Mammary epithelial cell (primary cell): ENCODE measurements at regions of chr2 and their contacts with region 1.

Region 1: GRCh38 chr2:219530048-219530963 is 13.3 kb downstream of the CHPF start:
- DNase-seq: peak; percentile 57
- H3K4me3 ChIP-seq: no peak overlapping the region
- H3K27ac ChIP-seq: no peak overlapping the region
- H3K4me1 ChIP-seq: no peaks in the 10 kb centered on the region
- H3K27me3 ChIP-seq: peaks cover 2% of the 10 kb centered on the region
- CTCF ChIP-seq: peak; percentile 93 to 99

Region 2: GRCh38 chr2:219160186-219161017 is 369.9 kb before region 1 on chr2 and contains the start of gene NHEJ1:
- CTCF ChIA-PET with region 1: no interaction called
- dilution Hi-C with region 1: no loop called
- in situ Hi-C with region 1: no loop called
- intact Hi-C with region 1: loop called (anchors 1 kb)
- DNase-seq: peak; percentile 88
- H3K4me3 ChIP-seq: peak within 1 kb of the TSS; percentile 74 to 91 (median 79)
- H3K27ac ChIP-seq: peak within 1 kb of the TSS; percentile 19
- H3K4me1 ChIP-seq: peaks cover 15% of the 10 kb centered on the region
- H3K27me3 ChIP-seq: no peaks in the 10 kb centered on the region
- CTCF ChIP-seq: peak; percentile 84 to 96
- total RNA-seq, gene NHEJ1: 10.4 to 13.3 TPM

Region 3: GRCh38 chr2:219402665-219403515 is 127.4 kb before region 1 on chr2:
- CTCF ChIA-PET with region 1: interaction called, 45 read pairs
- dilution Hi-C with region 1: no loop called
- in situ Hi-C with region 1: loop called (anchors 5 kb)
- intact Hi-C with region 1: loop called (anchors 1 kb)
- DNase-seq: peak; percentile 58
- H3K4me3 ChIP-seq: no peak overlapping the region
- H3K27ac ChIP-seq: no peak overlapping the region
- H3K4me1 ChIP-seq: no peaks in the 10 kb centered on the region
- H3K27me3 ChIP-seq: no peaks in the 10 kb centered on the region
- CTCF ChIP-seq: peak; percentile 93 to 99

Region 4: DNA sequence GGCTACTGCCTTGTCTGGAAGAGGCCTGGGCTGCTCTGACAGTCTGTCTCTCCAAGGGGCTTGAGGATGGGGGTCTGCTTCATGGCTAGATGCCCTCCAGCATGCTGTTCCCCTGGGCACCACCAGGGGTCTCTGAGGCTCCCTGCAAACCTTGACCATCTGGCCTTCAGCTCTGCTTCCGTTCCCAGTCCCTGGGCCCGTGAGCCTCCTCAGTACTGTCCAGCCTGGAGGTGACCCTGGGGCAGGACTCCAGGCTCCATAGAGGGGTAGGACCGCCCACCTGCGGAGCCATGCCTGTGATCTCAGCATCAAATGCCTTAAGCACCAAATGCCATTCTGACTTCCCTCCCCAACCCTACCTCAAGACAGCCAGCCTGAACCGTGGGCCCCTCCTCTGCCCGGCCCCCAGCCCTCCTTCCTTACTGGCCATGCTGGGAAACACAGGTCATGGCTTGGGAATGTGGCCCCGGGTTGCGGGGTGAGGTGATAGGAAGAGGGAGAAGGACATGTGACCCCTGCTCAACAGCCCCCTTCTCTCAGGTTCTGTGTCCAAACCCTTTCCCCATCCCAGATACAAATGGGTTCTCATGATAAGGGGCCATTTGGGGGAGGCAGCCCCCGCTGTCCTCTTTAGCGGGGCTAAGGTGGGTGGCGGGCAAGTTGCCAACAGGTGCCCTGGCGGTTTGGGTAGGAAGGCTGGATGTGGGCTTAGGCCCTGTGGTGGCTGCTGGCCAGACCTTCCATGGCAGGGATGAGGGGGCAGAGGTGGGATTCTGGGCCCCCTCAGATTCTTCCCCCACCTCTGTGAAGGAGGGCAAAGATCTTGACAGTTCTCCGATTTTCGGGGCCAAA is 70.6 kb before region 1 on chr2:
- CTCF ChIA-PET with region 1: interaction called, 10 read pairs
- dilution Hi-C with region 1: no loop called
- in situ Hi-C with region 1: no loop called
- intact Hi-C with region 1: loop called (anchors 1 kb)
- DNase-seq: peak; percentile 30
- H3K4me3 ChIP-seq: no peak overlapping the region
- H3K27ac ChIP-seq: no peak overlapping the region
- H3K4me1 ChIP-seq: peaks cover 49% of the 10 kb centered on the region
- H3K27me3 ChIP-seq: no peaks in the 10 kb centered on the region
- CTCF ChIP-seq: peak; percentile 93 to 97

Region 5: GRCh38 chr2:219475697-219476651 is 54.3 kb before region 1 on chr2:
- CTCF ChIA-PET with region 1: interaction called, 4 read pairs
- dilution Hi-C with region 1: loop called (anchors 5 kb)
- in situ Hi-C with region 1: no loop called
- intact Hi-C with region 1: loop called (anchors 1 kb)
- DNase-seq: no peak
- H3K4me3 ChIP-seq: no peak overlapping the region
- H3K27ac ChIP-seq: no peak overlapping the region
- H3K4me1 ChIP-seq: no peaks in the 10 kb centered on the region
- H3K27me3 ChIP-seq: no peaks in the 10 kb centered on the region
- CTCF ChIP-seq: peak; percentile 54 to 65